ENCODE measurements at regions of chr20 and their contacts with region 1.

Region 1: DNA sequence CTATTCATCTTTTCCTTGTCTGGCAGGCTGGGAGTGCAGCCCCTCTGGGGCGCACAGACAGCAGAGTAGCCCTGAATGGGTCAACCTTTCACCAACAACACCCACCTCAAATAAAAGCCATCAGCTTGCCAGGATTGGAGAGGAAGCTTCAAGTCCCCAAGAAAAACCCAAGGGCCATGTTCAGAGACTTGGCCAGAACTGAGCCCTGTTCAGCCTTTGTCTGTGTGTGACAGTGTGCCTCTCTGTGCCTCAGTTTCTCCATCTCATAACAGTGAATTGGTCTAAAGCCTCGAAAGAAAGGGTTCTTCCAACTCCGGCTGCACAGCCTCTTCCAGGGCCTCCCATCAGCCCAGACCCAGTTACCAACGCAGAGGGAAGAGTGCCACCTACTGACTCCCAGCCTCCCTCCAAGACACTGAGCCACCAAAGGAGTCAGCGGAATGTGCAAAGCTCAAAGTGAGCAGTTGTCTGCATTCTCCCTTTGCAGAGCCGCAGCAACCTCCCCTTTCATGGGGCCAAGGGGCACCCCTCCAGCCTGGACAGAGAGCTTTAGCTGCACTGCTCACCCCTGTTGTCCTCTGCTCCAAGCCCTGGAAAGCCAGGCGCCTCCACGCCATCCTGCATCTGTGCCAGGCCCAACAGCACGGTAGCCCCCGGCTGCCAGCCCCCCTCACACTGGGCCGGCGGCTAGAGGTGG is 82.7 kb upstream of the TOP1 start:
- DNase-seq: peak; percentile 27 to 61
- ATAC-seq: peak; percentile 74 to 90 (median 84)
- H3K4me3 ChIP-seq: no peak overlapping the region
- H3K27ac ChIP-seq: no peak overlapping the region
- H3K4me1 ChIP-seq: peaks cover 0 to 5% (median 0%) of the 10 kb centered on the region in 9 donors
- H3K27me3 ChIP-seq: peaks cover 0 to 31% (median 18%) of the 10 kb centered on the region in 7 donors
- CTCF ChIP-seq: peak in 8 of 9 donors; percentile 18 to 74 (median 64)

Region 2: DNA sequence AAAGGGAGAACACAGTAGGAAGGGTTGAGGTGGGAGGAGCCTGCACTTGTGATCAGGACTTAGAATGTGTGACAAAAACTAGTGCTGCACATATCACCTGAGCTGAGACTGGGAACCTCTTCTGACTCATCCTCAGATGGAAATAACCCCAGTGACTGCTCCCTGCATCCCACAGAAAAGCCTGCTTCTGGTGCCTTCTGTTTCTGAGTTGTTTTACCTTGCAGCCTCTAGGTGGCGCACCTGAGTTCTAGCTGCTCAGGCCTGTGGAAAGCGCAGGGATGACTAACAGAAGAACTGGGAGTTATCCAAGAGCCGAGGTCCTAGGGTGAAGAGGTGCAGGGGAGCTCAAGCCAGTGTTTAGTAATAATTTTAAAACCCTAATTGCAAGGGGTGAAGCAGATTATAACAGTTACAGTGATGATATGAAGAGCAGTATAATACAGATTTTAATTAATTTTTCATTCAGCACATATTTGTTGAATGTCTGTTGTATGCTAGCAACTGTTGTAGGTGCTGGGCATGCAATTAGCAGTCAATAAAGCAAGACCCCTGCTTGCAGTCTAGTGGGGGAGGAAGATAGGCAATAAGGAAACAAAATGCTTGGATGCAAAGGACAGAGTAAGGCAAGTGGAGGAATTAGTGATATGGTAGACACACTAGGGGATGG is 1681.3 kb before region 1 on chr20:
- intact Hi-C with region 1: loop called in 1 of 10 experiments (anchors 5 kb)
- DNase-seq: peak; percentile 41 to 50
- ATAC-seq: peak; percentile 28 to 79 (median 54)
- H3K4me3 ChIP-seq: no peak overlapping the region
- H3K27ac ChIP-seq: no peak overlapping the region
- H3K4me1 ChIP-seq: peaks cover 0 to 24% (median 0%) of the 10 kb centered on the region in 9 donors
- H3K27me3 ChIP-seq: peaks cover 0 to 8% (median 0%) of the 10 kb centered on the region in 7 donors
- CTCF ChIP-seq: peak; percentile 58 to 92 (median 86)

Region 3: GRCh38 chr20:40741507-40742106 is 204.3 kb before region 1 on chr20:
- intact Hi-C with region 1: loop called in 5 of 10 experiments (anchors 5 to 10 kb)
- DNase-seq: peak; percentile 27
- ATAC-seq: peak in 2 of 8 donors; percentile 61 to 70
- H3K4me3 ChIP-seq: no peak overlapping the region
- H3K27ac ChIP-seq: no peak overlapping the region
- H3K4me1 ChIP-seq: no peaks in the 10 kb centered on the region
- H3K27me3 ChIP-seq: peaks cover 0 to 15% (median 7%) of the 10 kb centered on the region in 7 donors
- CTCF ChIP-seq: peak in 8 of 9 donors; percentile 18 to 73 (median 63)

Region 4: GRCh38 chr20:40797425-40797824 is 148.5 kb before region 1 on chr20:
- intact Hi-C with region 1: loop called in 4 of 10 experiments (anchors 10 kb)
- DNase-seq: no peak
- ATAC-seq: no peak
- H3K4me3 ChIP-seq: no peak overlapping the region
- H3K27ac ChIP-seq: no peak overlapping the region
- H3K4me1 ChIP-seq: no peaks in the 10 kb centered on the region
- H3K27me3 ChIP-seq: peaks cover 0 to 16% (median 0%) of the 10 kb centered on the region in 7 donors
- CTCF ChIP-seq: peak in 7 of 9 donors; percentile 32 to 49 (median 41)

Region 5: GRCh38 chr20:40806929-40807820 is 138.7 kb before region 1 on chr20:
- intact Hi-C with region 1: loop called in 3 of 10 experiments (anchors 10 kb)
- DNase-seq: no peak
- ATAC-seq: no peak
- H3K4me3 ChIP-seq: no peak overlapping the region
- H3K27ac ChIP-seq: no peak overlapping the region
- H3K4me1 ChIP-seq: no peaks in the 10 kb centered on the region
- H3K27me3 ChIP-seq: peaks cover 0 to 36% (median 17%) of the 10 kb centered on the region in 7 donors
- CTCF ChIP-seq: no peak

Region 6: GRCh38 chr20:41011551-41012067 is 65.7 kb after region 1 on chr20:
- intact Hi-C with region 1: no loop called
- DNase-seq: no peak
- ATAC-seq: no peak
- H3K4me3 ChIP-seq: no peak overlapping the region
- H3K27ac ChIP-seq: no peak overlapping the region
- H3K4me1 ChIP-seq: peaks cover 0 to 49% (median 3%) of the 10 kb centered on the region in 9 donors
- H3K27me3 ChIP-seq: no peaks in the 10 kb centered on the region
- CTCF ChIP-seq: no peak

Region 7: DNA sequence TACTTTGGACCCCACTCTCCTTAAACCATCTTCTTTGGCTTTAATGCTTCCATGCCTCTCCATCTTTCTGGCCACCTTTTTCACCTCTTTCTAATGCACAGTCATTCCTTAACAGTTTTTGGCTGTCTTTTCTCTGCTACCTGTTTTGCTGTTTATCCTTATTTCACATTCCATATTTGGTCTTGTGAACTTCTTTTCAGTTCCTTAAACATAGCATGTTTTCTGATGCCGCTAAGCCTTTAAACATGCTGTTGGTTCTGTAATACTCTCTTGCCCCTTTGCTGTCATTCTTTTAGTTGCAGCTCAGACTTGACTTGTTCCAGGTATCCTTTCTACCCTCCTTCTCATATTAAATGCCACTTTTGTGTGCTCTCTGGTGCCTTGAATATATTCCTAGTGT is 118.5 kb after region 1 on chr20:
- intact Hi-C with region 1: no loop called
- DNase-seq: no peak
- ATAC-seq: no peak
- H3K4me3 ChIP-seq: no peak overlapping the region
- H3K27ac ChIP-seq: no peak overlapping the region
- H3K4me1 ChIP-seq: peaks cover 0 to 24% (median 10%) of the 10 kb centered on the region in 9 donors
- H3K27me3 ChIP-seq: no peaks in the 10 kb centered on the region
- CTCF ChIP-seq: no peak

Region 8: GRCh38 chr20:41232973-41233926 is 287.3 kb after region 1 on chr20:
- intact Hi-C with region 1: no loop called
- DNase-seq: no peak
- ATAC-seq: peak; percentile 32 to 70 (median 55)
- H3K4me3 ChIP-seq: peak overlapping the region in 2 of 10 donors; percentile 26 to 34
- H3K27ac ChIP-seq: peak overlapping the region; percentile 63 to 88 (median 82)
- H3K4me1 ChIP-seq: peaks cover 24 to 74% (median 69%) of the 10 kb centered on the region in 9 donors
- H3K27me3 ChIP-seq: no peaks in the 10 kb centered on the region
- CTCF ChIP-seq: no peak